ENCODE measurements at regions of chr10 and their contacts with region 1.

Region 1: DNA sequence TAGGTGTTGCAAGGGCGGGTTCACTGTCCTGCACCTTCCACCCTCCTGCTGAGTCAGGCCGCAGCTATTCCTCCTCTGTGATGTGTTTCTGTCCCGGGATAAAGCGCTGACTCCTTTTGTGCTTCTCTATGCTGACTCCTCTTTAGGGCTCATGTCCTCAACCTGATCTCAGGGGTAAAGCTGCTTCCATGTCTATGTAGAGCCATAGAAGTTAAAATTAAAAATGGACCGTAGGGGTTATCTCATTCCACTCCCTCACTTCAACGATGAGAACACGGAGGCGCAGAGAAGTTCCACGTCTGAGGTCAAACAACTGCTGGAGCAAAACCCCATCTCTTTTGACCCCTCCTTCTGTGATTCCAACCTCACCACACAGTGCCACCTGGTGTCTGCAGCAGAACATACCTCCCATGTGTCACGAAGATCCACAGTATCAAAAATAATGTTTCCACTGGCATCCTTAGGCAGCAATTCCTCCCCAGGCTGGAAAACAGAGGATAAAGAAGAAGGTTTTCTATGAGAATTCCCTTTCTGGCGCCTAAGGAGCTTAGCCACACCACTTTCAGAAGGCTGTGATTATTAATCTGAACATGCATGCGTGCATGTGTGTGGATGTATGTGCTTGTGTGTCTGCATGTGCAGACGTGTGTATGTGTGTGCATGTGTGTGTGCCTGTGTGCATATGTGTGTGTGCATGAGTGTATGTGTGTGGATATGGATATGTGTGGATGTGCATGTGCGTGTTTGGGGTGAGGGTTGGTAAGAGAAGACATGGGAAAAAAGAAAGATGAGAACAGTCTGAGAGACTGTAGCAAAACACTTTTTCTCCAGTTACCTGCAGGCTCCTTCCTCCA is 81.2 kb upstream of the UCN3 start:
- DNase-seq: peak in 4 of 5 donors; percentile 44 to 63 (median 58)
- ATAC-seq: peak in 3 of 4 donors; percentile 88 to 95 (median 94)
- H3K4me3 ChIP-seq: no peak overlapping the region
- H3K27ac ChIP-seq: peak overlapping the region in 1 of 12 donors; percentile 63
- H3K4me1 ChIP-seq: peaks cover 0 to 22% (median 0%) of the 10 kb centered on the region in 12 donors
- H3K27me3 ChIP-seq: peaks cover 0 to 4% (median 0%) of the 10 kb centered on the region in 9 donors
- CTCF ChIP-seq: peak; percentile 54 to 76 (median 62)
- POLR2A ChIP-seq: no peak

Region 2: DNA sequence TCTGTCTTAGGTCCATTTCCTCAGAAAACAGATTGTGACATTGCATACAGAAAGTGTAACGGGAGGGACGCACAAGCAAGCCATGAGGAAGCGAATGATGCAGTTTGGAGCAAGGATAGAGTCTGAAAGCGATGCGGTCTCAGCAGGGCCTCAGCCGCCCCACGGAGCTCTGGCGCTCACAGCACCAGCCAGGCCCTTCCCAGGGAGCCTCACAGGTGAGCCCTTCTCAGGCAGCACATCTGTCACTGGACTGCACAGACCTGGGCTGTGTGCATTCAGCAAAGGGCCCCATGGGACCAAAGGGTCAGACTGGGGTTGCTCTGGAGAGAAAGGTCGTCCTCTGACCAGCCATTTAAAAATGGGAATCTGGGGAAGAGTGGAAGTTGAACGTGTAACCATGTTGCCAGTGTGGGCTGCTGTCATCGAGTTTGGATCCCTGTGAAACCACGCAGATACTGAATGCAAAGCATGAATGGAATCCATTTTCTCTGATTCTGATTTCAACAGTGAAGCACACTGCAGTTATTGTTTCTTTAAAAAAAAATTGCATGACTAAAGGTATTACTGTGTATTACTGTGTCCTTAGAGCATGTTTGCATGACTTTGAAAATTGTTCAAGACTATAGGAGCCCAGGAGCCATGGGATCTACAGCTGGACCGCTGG is 807.6 kb before region 1 on chr10:
- intact Hi-C with region 1: no loop called
- DNase-seq: peak in 1 of 5 donors; percentile 9
- ATAC-seq: no peak
- H3K4me3 ChIP-seq: no peak overlapping the region
- H3K27ac ChIP-seq: no peak overlapping the region
- H3K4me1 ChIP-seq: no peaks in the 10 kb centered on the region
- H3K27me3 ChIP-seq: no peaks in the 10 kb centered on the region
- CTCF ChIP-seq: no peak
- POLR2A ChIP-seq: no peak

Region 3: DNA sequence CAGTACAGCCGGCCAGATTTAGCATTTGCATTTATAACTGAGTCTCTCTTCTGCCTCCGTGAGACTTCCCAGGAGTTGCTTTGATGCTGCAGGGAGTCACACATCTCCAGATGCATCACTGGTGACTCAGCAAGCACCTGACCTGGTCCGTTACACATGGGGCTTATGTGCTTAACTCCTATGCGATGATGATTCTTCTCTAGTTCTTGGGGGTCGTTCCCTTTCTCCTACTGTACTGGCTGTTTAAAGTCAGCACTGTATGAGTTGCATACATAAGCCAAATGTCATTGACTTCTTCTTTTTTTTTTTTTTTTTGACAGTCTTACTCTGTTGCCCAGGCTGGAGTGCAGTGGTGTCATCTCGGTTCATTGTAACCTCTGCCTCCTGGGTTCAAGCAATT is 470.5 kb before region 1 on chr10:
- intact Hi-C with region 1: loop called in 2 of 10 experiments (anchors 10 kb)
- DNase-seq: no peak
- ATAC-seq: no peak
- H3K4me3 ChIP-seq: no peak overlapping the region
- H3K27ac ChIP-seq: no peak overlapping the region
- H3K4me1 ChIP-seq: peaks cover 0 to 24% (median 0%) of the 10 kb centered on the region in 12 donors
- H3K27me3 ChIP-seq: no peaks in the 10 kb centered on the region
- CTCF ChIP-seq: no peak
- POLR2A ChIP-seq: no peak

Region 4: GRCh38 chr10:5014936-5015335 is 268.6 kb before region 1 on chr10:
- intact Hi-C with region 1: loop called in 3 of 10 experiments (anchors 5 kb)
- DNase-seq: no peak
- ATAC-seq: no peak
- H3K4me3 ChIP-seq: no peak overlapping the region
- H3K27ac ChIP-seq: no peak overlapping the region
- H3K4me1 ChIP-seq: peaks cover 0 to 28% (median 13%) of the 10 kb centered on the region in 12 donors
- H3K27me3 ChIP-seq: no peaks in the 10 kb centered on the region
- CTCF ChIP-seq: peak in 2 of 12 donors; percentile 6 to 11
- POLR2A ChIP-seq: no peak

Region 5: GRCh38 chr10:5229019-5229418 is 54.5 kb before region 1 on chr10:
- intact Hi-C with region 1: no loop called
- DNase-seq: no peak
- ATAC-seq: no peak
- H3K4me3 ChIP-seq: no peak overlapping the region
- H3K27ac ChIP-seq: no peak overlapping the region
- H3K4me1 ChIP-seq: peaks cover 0 to 4% (median 0%) of the 10 kb centered on the region in 12 donors
- H3K27me3 ChIP-seq: no peaks in the 10 kb centered on the region
- CTCF ChIP-seq: no peak
- POLR2A ChIP-seq: no peak

Region 6: GRCh38 chr10:5385224-5385623 is 101.7 kb after region 1 on chr10:
- intact Hi-C with region 1: loop called in 1 of 10 experiments (anchors 5 kb)
- DNase-seq: no peak
- ATAC-seq: no peak
- H3K4me3 ChIP-seq: no peak overlapping the region
- H3K27ac ChIP-seq: no peak overlapping the region
- H3K4me1 ChIP-seq: no peaks in the 10 kb centered on the region
- H3K27me3 ChIP-seq: no peaks in the 10 kb centered on the region
- CTCF ChIP-seq: no peak
- POLR2A ChIP-seq: no peak

Measured in heart left ventricle (tissue), 16 donors.